B cell (primary cell): ENCODE measurements at regions of chr4 and their contacts with region 1.

Region 1: GRCh38 chr4:41661442-41662076 is 87.0 kb downstream of the PHOX2B start:
- DNase-seq: peak; percentile 41
- ATAC-seq: peak; percentile 33
- H3K4me3 ChIP-seq: no peak overlapping the region
- H3K4me3 Mint-ChIP-seq: no peak overlapping the region
- H3K27ac ChIP-seq: no peak overlapping the region
- H3K27ac Mint-ChIP-seq: no peak overlapping the region
- H3K4me1 ChIP-seq: no peaks in the 10 kb centered on the region
- H3K4me1 Mint-ChIP-seq: no peaks in the 10 kb centered on the region
- H3K27me3 ChIP-seq: no peaks in the 10 kb centered on the region
- H3K27me3 Mint-ChIP-seq: peaks cover 20% of the 10 kb centered on the region
- CTCF ChIP-seq: peak; percentile 98

Region 2: GRCh38 chr4:41678086-41678816 is 16.7 kb after region 1 on chr4:
- CTCF ChIA-PET with region 1: interaction called, 10 read pairs
- POLR2A ChIA-PET with region 1: no interaction called
- intact Hi-C with region 1: no loop called
- DNase-seq: no peak
- ATAC-seq: no peak
- H3K4me3 ChIP-seq: no peak overlapping the region
- H3K4me3 Mint-ChIP-seq: no peak overlapping the region
- H3K27ac ChIP-seq: no peak overlapping the region
- H3K27ac Mint-ChIP-seq: no peak overlapping the region
- H3K4me1 ChIP-seq: no peaks in the 10 kb centered on the region
- H3K4me1 Mint-ChIP-seq: no peaks in the 10 kb centered on the region
- H3K27me3 ChIP-seq: no peaks in the 10 kb centered on the region
- H3K27me3 Mint-ChIP-seq: peaks cover 3% of the 10 kb centered on the region
- CTCF ChIP-seq: no peak

Region 3: DNA sequence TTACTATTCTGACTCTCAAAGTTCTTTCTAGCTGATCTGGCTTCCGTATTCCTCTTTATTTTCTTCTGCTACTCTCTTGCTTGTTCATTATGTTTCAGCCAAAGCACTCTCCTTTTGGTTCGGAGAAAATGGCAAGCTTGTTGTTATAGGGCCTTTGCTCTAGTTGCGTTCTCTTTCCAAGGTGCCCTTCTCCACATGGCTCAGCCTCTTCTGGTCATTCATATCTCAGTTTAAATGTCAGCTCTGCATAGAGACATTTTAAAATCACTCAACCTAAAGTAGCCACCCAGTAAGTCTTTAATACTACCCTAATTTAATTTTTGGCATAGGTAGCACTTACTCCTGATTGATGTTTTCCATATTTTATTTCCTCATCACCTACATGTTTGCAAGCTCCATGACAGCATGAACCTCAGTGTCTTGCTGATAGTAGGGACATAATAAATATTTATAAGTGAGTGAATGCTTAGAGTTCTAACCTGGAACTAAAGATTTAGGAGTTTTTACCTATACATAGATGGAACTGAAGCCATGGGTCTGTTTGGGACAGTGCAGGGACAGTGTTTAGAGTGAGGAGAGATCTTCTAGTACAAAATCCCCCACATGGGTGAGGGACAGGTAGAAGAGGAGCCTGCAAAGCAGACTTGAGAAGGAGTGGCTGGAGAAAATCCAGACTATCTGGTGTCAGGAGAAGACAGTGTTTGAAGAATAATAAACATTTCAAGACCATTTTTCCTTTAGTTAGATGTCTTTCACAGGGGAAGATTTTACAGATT is 346.6 kb after region 1 on chr4:
- CTCF ChIA-PET with region 1: no interaction called
- POLR2A ChIA-PET with region 1: no interaction called
- intact Hi-C with region 1: no loop called
- DNase-seq: no peak
- ATAC-seq: no peak
- H3K4me3 ChIP-seq: no peak overlapping the region
- H3K4me3 Mint-ChIP-seq: no peak overlapping the region
- H3K27ac ChIP-seq: no peak overlapping the region
- H3K27ac Mint-ChIP-seq: no peak overlapping the region
- H3K4me1 ChIP-seq: no peaks in the 10 kb centered on the region
- H3K4me1 Mint-ChIP-seq: peaks cover under 1% of the 10 kb centered on the region
- H3K27me3 ChIP-seq: no peaks in the 10 kb centered on the region
- H3K27me3 Mint-ChIP-seq: no peaks in the 10 kb centered on the region
- CTCF ChIP-seq: no peak

Region 4: GRCh38 chr4:42350611-42351182 is 689.1 kb after region 1 on chr4:
- CTCF ChIA-PET with region 1: no interaction called
- POLR2A ChIA-PET with region 1: no interaction called
- intact Hi-C with region 1: no loop called
- DNase-seq: no peak
- ATAC-seq: no peak
- H3K4me3 ChIP-seq: no peak overlapping the region
- H3K4me3 Mint-ChIP-seq: no peak overlapping the region
- H3K27ac ChIP-seq: no peak overlapping the region
- H3K27ac Mint-ChIP-seq: no peak overlapping the region
- H3K4me1 ChIP-seq: no peaks in the 10 kb centered on the region
- H3K4me1 Mint-ChIP-seq: peaks cover 2% of the 10 kb centered on the region
- H3K27me3 ChIP-seq: peaks cover 0 to 2% (median 0%) of the 10 kb centered on the region in 4 experiments
- H3K27me3 Mint-ChIP-seq: peaks cover 26% of the 10 kb centered on the region
- CTCF ChIP-seq: no peak